BJ (cell line): ENCODE measurements at regions of chr20 and their contacts with region 1.

Region 1: GRCh38 chr20:1764136-1765033 is 106.8 kb upstream of the SIRPG start:
- DNase-seq: peak; percentile 31
- H3K4me3 ChIP-seq: no peak overlapping the region
- H3K27me3 ChIP-seq: peaks cover 1% of the 10 kb centered on the region; the same call in 1 of the 2 replicates
- CTCF ChIP-seq: peak; percentile 85

Region 2: GRCh38 chr20:1741309-1742048 is 22.9 kb before region 1 on chr20:
- CTCF ChIA-PET with region 1: no interaction called
- POLR2A ChIA-PET with region 1: no interaction called
- DNase-seq: no peak
- H3K4me3 ChIP-seq: no peak overlapping the region
- H3K27me3 ChIP-seq: peaks cover 2% of the 10 kb centered on the region; the same call in 1 of the 2 replicates
- CTCF ChIP-seq: no peak

Region 3: DNA sequence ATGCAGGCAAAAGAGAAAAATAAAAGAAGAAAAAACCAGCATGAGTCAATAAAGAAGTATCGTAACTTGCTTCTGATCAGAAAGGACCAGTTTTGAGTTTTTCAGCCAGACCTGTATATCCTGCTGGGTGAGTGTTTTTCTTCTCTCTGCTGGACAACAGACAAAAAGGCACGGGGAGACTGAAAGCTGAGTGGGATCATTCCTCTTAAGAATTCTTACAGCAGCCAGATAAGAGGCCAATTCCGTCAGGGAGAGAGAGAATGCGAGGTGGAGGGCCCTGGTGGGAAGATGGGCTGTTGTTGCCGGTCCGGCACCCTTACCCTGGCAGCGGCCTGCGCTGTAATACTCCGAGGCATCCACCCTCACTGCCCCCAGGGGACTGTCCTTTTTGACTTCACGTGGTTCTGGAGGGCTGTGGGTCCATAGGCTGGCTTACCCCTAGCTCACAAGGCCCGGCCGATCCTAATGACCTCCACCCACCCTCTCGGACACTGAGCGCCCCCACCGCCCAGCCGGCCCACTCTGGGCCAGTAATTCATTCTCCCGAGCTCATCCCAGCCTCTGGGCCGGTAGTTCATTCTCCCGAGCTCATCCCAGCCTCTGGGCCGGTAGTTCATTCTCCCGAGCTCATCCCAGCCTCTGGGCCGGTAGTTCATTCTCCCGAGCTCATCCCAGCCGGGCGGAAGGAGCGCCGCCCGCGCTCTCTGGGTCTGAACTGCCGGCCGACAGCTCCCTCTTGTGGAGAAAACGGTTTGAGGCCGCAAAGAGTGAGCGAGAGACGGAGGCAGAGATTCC is 12.5 kb after region 1 on chr20:
- CTCF ChIA-PET with region 1: interaction called, 50 read pairs
- POLR2A ChIA-PET with region 1: no interaction called
- DNase-seq: no peak
- H3K4me3 ChIP-seq: peak overlapping the region; percentile 76
- H3K27me3 ChIP-seq: peaks cover 5% of the 10 kb centered on the region
- CTCF ChIP-seq: peak; percentile 85

Region 4: DNA sequence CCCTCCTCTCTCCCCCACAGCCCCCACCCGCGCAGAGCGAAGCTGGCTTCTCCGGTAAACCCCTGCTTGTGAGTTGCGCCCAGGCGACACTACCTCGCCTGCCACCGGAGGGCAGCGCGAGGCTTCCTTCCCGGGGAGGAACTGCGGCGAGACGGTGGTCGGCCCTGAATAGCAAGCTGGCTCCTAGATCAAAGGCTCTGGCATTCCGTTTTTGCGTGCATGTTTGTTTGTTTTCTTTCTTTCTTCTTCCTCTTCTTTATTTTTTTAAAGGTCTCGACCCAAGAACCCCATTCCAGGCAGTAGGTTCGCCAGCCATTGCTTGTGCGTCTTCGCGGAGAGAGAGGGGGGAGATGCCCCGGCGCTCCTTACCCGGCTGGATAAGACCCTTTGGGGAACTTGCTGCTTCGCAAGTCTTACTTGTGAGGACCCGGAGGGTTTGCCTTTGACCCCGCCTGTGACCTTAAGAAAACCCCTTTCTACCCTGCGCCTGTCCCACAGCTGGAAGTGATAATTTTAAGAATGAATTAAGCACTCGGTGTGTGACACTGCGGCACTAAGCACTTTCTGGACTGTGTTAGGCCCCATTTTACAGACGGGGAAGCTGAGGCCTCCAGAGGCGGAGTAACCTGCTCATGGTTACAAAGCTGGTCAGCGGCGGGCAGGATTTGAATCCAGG is 38.1 kb after region 1 on chr20:
- CTCF ChIA-PET with region 1: interaction called, 29 read pairs
- POLR2A ChIA-PET with region 1: no interaction called
- DNase-seq: no peak
- H3K4me3 ChIP-seq: peak overlapping the region; percentile 45
- H3K27me3 ChIP-seq: 0 out of 2 replicates have a peak, but pooled peaks cover 1% of the 10 kb centered on the region
- CTCF ChIP-seq: peak; percentile 82

Region 5: DNA sequence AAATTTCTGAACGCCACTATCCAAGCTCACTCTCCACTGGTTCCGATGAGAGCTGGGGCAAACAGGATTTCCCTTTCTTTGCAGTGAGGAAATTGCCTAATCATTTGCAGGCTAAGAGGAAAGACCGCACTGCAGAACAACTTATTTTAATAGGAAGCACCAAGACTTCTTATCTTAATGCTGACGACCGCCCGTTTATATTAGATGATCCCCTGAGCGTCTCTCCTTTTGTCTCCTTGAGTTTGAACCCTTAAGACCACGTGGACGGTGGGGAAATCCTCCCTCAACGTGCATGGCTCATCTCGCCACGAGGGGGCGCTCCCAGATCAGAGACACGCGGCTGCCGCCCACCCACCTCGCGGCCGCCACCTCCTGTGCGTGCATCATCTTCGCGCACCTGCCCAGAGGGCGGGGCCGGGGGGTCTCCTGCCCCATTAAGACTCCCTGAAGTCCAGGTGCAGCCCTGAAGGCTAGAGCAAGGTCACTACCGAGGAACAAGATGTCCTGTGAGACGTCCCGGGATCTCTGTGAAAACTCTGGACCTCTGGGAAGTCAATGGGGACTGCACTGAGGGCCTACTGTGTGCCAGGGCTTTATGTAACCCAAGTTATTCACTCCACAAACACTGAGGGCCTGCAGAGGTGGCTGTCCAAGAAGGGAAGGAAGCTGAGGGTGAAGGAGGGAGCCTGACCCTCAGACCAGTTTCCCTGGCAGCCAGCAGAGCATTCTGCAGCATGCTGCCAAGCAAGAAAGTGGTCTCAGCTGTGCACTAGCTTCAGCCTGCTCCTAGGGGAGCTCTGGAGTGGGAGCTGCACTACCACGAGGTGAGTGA is 201.4 kb after region 1 on chr20:
- CTCF ChIA-PET with region 1: interaction called, 15 read pairs
- POLR2A ChIA-PET with region 1: no interaction called
- DNase-seq: no peak
- H3K4me3 ChIP-seq: no peak overlapping the region
- H3K27me3 ChIP-seq: peaks cover 23% of the 10 kb centered on the region
- CTCF ChIP-seq: peak; percentile 94